ENCODE measurements at regions of chr17 and their contacts with region 1.

Region 1: DNA sequence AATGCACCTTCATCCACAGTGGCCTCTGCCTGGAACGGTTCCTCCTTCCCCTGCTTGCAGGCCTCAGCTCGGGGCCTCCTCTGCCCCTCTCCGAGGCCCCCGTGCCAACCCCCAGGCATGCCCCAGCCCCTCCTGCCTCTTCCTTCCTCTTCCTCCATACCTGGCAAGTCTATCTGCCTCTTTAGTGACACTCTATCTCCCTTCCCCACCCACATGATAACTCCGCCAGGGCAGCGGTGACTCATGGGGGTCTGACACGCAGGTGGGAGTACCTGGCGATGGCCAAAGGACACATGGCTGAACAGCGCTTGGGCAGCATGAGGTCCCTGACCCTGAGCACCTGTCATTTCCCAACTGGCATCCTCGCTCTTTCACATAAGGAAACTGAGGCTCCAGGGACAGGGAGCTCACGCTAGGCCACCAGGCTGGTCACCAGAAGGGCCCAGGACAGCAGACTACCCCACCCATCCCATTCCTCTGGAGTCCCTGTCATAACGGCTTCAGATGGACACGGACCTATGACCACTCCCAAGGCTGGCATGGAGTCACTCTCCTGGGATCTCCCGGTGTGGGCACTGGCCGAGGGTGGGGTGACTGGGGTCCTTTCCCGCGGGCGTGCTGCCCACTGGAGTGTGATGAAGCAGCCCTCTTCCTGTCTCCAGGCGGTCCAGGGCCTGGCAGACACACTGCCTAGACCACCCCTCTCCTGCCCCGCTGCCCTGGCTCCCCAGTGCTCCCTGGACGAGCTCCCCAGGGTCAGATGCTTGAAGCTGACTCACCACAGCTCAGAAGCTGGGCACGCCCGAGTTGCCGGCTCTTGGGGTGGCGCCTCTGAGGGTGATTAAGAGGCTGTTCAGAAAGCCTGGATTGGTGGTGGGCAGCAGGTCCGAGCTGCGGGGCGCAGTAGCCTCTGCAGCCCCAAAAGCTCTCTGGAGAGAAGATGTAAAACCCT is 100.6 kb downstream of the ENGASE start:
- DNase-seq: no peak
- H3K4me3 ChIP-seq: no peak overlapping the region
- H3K27ac ChIP-seq: no peak overlapping the region
- H3K4me1 ChIP-seq: no peaks in the 10 kb centered on the region
- CTCF ChIP-seq: no peak

Region 2: DNA sequence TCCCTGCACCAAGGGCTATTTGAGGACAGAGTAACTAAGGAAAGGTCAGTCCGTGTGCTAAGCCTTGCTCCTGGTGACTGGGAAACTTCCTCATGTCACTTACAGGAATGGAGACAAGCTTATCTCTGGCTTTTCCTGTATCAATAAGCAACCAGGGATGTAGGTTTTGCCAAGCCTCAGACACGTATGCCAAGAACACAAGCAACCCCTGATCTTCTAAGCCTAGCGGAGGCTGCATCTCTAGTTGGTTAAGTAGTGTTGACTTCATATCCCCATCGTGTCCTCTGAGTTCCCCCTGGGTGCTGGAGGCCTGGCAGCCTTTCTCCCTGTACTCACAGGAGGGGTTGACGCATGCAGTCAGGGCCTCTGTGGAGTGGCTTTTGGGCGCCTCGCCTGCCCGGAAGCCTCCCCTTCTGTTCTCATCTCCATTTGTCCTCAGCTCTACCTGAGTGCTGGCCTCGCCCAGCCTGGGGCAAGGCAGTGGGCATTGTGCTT is 152.6 kb before region 1 on chr17:
- CTCF ChIA-PET with region 1: interaction called, 13 read pairs
- POLR2A ChIA-PET with region 1: no interaction called
- intact Hi-C with region 1: no loop called
- DNase-seq: no peak
- H3K4me3 ChIP-seq: no peak overlapping the region
- H3K27ac ChIP-seq: no peak overlapping the region
- H3K4me1 ChIP-seq: no peaks in the 10 kb centered on the region
- CTCF ChIP-seq: no peak

Region 3: DNA sequence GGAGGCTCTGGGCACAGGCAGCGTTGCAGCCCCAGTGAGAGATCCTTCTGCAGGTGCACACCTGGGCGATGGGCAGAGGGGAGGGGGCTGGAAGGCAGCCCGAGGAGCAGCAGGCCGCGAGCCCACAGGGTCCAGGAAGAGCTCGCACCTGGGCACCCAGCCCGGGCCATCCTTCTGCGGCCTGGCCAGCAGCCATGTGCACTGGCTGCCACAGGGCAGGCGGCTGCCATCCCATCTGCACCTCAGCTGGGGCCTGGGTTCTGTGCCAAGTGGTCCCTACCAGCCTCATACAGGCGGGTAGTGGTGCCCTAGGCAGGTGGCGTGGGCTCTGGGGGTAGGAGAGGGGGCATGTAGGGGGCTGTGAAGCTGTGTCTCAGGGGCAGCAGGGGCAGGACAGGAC is 238.4 kb after region 1 on chr17:
- CTCF ChIA-PET with region 1: no interaction called
- POLR2A ChIA-PET with region 1: no interaction called
- intact Hi-C with region 1: no loop called
- DNase-seq: no peak
- H3K4me3 ChIP-seq: no peak overlapping the region
- H3K27ac ChIP-seq: no peak overlapping the region
- H3K4me1 ChIP-seq: no peaks in the 10 kb centered on the region
- CTCF ChIP-seq: no peak

Region 4: DNA sequence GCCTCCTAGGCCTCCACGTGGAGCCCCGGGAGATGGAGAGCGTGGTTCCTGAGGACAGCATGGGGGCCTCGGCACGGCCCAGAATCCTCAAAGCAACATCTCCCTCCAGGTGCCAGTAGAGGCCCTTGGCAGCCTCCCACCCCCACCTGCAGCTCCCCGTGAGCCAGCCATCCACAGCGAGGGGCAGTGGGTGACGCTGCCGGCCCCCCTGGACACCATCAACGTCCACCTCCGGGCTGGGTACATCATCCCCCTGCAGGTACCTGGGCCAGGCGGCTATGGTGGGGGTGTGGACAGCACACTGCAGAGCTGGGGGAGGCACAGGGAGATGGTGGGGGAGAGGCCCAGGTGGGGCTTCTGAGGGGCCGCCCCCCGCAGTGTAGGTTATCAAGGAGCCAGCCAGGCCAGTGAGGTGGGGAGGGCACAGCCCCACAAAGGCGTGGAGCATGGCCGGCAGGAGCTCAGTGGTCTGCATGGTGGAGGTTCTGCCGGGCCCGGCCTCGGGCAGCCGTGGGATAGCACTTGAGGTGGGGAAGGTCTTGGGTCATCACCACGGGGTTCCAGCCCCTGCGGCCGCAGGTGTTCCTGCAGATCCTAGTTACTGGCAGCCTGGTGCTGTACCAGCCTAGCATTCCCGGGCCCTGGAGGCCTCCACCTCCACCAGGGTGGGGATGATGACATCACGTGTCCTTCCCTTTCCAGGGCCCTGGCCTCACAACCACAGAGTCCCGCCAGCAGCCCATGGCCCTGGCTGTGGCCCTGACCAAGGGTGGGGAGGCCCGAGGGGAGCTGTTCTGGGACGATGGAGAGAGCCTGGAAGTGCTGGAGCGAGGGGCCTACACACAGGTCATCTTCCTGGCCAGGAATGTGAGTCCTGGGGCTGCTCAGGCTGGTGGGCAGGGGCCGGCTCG is 942.6 kb after region 1 on chr17:
- CTCF ChIA-PET with region 1: no interaction called
- POLR2A ChIA-PET with region 1: no interaction called
- intact Hi-C with region 1: no loop called
- DNase-seq: no peak
- H3K4me3 ChIP-seq: no peak overlapping the region
- H3K27ac ChIP-seq: no peak overlapping the region
- H3K4me1 ChIP-seq: peaks cover 3% of the 10 kb centered on the region
- CTCF ChIP-seq: no peak

Measured in OCI-LY7 (cell line).